ENCODE measurements at regions of chr12 and their contacts with region 1.

Region 1: GRCh38 chr12:6493497-6494257 is at the start of gene NCAPD2:
- DNase-seq: peak; percentile 82 to 97 (median 96)
- ATAC-seq: peak; percentile 91
- H3K4me3 ChIP-seq: peak within 1 kb of the TSS; percentile 98
- H3K4me3 Mint-ChIP-seq: peak within 1 kb of the TSS; percentile 86 to 98 (median 96)
- H3K27ac ChIP-seq: peak within 1 kb of the TSS; percentile 83
- H3K27ac Mint-ChIP-seq: peak within 1 kb of the TSS; percentile 87 to 97 (median 96)
- H3K4me1 ChIP-seq: peaks cover 22 to 24% of the 10 kb centered on the region in 2 donors
- H3K4me1 Mint-ChIP-seq: peaks cover 18 to 44% (median 37%) of the 10 kb centered on the region in 7 donors
- H3K27me3 ChIP-seq: no peaks in the 10 kb centered on the region
- H3K27me3 Mint-ChIP-seq: no peaks in the 10 kb centered on the region
- total RNA-seq, gene NCAPD2: 30.3 to 121 (median 38.4) TPM

Region 2: DNA sequence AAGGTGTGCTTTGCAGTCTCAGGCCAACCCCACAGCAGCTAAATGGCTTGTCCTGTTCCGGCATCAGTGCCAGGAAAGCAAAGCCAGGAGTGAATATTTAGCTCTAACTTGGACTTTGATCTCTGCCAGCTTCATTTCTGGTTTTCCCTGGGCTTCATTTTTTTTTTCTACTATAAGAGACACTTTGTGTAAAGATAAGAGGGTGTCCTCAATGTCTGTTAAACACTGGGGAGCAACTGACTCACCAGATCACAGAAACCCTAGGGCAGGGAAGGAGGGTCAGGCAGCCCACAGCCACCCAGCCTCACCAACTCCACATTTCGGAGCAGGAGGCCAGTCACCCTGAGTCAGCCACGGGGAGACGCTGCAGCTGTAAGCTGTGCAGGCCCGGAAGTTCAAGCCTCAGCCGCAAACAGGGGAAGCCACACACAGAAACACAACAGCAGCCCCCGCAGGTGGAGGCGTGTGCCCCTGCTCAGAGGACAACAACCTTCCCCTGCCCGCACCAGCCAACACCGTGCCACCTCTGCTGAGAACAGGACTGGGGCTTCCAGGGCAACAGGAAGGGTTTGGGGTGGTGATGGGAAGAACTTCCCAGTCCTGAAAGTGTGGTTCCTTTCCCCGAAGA is 158.1 kb before region 1 on chr12:
- CTCF ChIA-PET with region 1: interaction called, 3 read pairs
- POLR2A ChIA-PET with region 1: interaction called, 4 read pairs
- intact Hi-C with region 1: loop called (anchors 1 to 2 kb)
- DNase-seq: peak; percentile 56 to 85 (median 81)
- ATAC-seq: peak; percentile 82
- H3K4me3 ChIP-seq: peak overlapping the region; percentile 88
- H3K4me3 Mint-ChIP-seq: no peak overlapping the region
- H3K27ac ChIP-seq: peak overlapping the region; percentile 92
- H3K27ac Mint-ChIP-seq: no peak overlapping the region
- H3K4me1 ChIP-seq: peaks cover 58 to 67% of the 10 kb centered on the region in 2 donors
- H3K4me1 Mint-ChIP-seq: peaks cover 4 to 44% (median 36%) of the 10 kb centered on the region in 7 donors
- H3K27me3 ChIP-seq: no peaks in the 10 kb centered on the region
- H3K27me3 Mint-ChIP-seq: no peaks in the 10 kb centered on the region

Region 3: DNA sequence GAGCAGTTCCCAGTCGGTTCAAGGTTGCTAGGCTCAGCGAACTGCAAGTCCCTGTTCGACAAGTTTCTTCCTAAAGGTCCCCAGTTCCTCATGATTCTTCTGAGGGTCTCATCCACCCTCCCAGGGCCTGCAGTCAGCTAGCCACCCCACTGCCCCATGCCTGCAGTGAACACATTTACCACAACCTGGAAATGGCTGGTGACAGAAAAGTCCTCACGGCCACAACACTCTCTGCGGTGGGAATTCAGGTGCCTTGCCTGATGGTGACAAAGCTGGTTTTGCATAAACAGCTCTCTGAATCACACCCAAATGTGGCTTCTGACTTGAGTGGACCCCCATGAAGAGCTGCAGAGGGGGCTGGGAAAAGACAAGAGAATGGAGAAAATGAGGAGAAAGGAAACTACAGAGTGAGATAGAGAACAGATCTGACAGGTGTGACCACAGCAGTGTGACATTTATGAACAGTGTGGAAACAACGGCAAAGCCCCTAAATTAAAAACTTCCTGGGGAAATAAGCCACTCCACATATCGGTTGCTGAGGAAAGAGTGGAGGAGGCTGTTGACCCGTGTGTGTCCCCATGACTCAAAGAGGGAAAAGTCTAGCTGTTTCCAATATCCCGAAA is 50.2 kb before region 1 on chr12:
- CTCF ChIA-PET with region 1: no interaction called
- POLR2A ChIA-PET with region 1: interaction called, 5 read pairs
- intact Hi-C with region 1: loop called (anchors 1 kb)
- DNase-seq: no peak
- ATAC-seq: no peak
- H3K4me3 ChIP-seq: peak overlapping the region; percentile 19
- H3K4me3 Mint-ChIP-seq: peak overlapping the region; percentile 95 to 100 (median 100)
- H3K27ac ChIP-seq: peak overlapping the region; percentile 87
- H3K27ac Mint-ChIP-seq: peak overlapping the region; percentile 92 to 100 (median 95)
- H3K4me1 ChIP-seq: peaks cover 25 to 32% of the 10 kb centered on the region in 2 donors
- H3K4me1 Mint-ChIP-seq: peaks cover 22 to 63% (median 53%) of the 10 kb centered on the region in 7 donors
- H3K27me3 ChIP-seq: no peaks in the 10 kb centered on the region
- H3K27me3 Mint-ChIP-seq: no peaks in the 10 kb centered on the region

Region 4: DNA sequence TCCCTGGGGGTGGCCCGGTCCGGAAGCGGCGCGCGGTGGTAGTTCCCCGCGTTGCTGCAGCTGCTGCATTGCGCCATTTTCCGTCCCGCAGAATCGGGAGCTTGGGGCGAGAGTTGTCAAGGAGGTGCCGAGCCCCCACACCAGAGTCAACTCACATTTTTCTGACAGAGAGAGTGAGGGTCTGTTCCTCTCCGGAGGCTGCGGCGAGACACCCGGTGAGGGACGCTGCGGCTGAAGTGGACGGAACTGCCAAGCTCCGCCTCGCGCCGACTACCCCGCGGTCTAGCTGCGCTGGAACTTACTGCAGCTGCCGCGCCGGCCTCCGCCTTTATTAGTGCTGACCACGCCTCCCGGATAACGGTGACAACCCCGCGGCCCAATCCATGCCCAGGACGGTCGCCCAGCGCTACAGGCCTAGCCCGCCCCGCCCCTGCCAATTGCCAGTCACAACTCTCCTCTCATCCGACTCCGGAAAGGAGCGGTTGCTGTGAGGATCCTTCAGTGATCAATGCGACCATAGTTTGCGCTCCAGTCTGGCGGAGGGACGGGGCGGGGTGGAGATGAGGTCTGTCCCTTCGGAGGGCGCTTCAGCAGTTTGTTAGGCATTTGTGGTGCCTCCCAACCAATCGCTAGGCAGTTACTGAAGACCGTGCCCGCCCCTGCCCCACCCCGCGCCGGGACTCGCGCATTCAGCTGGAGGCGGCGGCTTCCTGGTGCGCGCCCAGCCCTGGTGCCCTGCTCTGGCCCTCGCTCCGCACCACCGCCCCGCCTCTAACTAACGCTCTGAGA is 23.1 kb before region 1 on chr12 and contains the start of gene VAMP1:
- CTCF ChIA-PET with region 1: interaction called, 8 read pairs
- POLR2A ChIA-PET with region 1: interaction called, 55 read pairs
- intact Hi-C with region 1: loop called (anchors 1 kb)
- DNase-seq: peak; percentile 90 to 97 (median 95)
- ATAC-seq: peak; percentile 94
- H3K4me3 ChIP-seq: peak within 1 kb of the TSS; percentile 96
- H3K4me3 Mint-ChIP-seq: peak within 1 kb of the TSS; percentile 85 to 96 (median 92)
- H3K27ac ChIP-seq: peak within 1 kb of the TSS; percentile 75
- H3K27ac Mint-ChIP-seq: peak within 1 kb of the TSS; percentile 79 to 99 (median 95)
- H3K4me1 ChIP-seq: peaks cover 38 to 39% of the 10 kb centered on the region in 2 donors
- H3K4me1 Mint-ChIP-seq: peaks cover 26 to 59% (median 52%) of the 10 kb centered on the region in 7 donors
- H3K27me3 ChIP-seq: no peaks in the 10 kb centered on the region
- H3K27me3 Mint-ChIP-seq: peaks cover 0 to 5% (median 0%) of the 10 kb centered on the region in 5 donors
- total RNA-seq, gene VAMP1: 38.7 to 123 (median 47.9) TPM

Region 5: DNA sequence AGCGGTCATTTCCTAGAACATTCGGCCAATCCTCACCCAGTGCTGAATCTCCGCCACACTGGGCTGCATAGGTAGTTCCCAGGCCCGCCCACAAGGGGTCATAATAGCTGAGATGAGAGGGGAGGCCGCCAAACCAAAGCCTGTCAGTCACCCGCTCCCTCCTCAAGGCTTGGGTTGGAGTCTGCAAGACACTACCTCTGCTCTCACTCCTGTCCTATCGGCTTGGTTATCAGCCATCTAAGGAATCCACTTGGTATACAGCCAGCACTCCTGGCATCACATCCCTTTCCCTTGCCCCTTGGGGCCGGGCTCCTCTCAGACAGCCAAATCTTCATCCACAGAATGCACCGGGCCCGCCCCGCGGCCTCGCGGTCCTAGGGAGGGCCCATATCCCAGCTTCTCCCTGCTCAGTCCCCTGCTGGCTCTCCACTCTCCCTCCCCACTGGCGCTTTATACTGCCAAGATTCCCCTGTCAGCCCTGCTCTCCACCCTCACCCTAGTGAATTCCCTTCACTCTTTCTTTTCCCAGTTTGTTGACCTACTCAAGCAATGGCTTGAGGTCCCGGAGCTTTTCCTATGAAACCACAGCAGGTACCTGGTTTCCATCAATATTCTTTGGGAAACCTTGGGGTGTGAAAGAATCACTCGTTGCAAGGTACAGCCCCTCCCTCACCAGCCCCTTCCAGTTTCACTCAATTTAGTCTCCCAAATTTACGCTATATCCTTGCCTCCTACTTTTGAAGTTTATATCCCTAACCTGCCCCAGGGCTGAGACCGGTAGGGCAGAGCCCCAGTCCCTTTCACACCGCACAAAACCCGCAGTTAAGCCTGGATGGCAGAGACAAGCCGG is 60.7 kb after region 1 on chr12:
- CTCF ChIA-PET with region 1: interaction called, 7 read pairs
- POLR2A ChIA-PET with region 1: interaction called, 4 read pairs
- intact Hi-C with region 1: loop called in 1 of 2 experiments (anchors 1 kb)
- DNase-seq: peak; percentile 38 to 57 (median 52)
- ATAC-seq: peak; percentile 67
- H3K4me3 ChIP-seq: peak overlapping the region; percentile 92
- H3K4me3 Mint-ChIP-seq: peak overlapping the region; percentile 80 to 96 (median 90)
- H3K27ac ChIP-seq: peak overlapping the region; percentile 71
- H3K27ac Mint-ChIP-seq: peak overlapping the region; percentile 14 to 88 (median 55)
- H3K4me1 ChIP-seq: peaks cover 26 to 29% of the 10 kb centered on the region in 2 donors
- H3K4me1 Mint-ChIP-seq: peaks cover 39 to 62% (median 56%) of the 10 kb centered on the region in 7 donors
- H3K27me3 ChIP-seq: no peaks in the 10 kb centered on the region
- H3K27me3 Mint-ChIP-seq: no peaks in the 10 kb centered on the region

Region 6: GRCh38 chr12:6723607-6724396 is 230.1 kb after region 1 on chr12 and contains the start of gene COPS7A:
- CTCF ChIA-PET with region 1: no interaction called
- POLR2A ChIA-PET with region 1: no interaction called
- intact Hi-C with region 1: loop called (anchors 1 kb)
- DNase-seq: peak; percentile 77 to 94 (median 90)
- ATAC-seq: peak; percentile 93
- H3K4me3 ChIP-seq: peak within 1 kb of the TSS; percentile 63
- H3K4me3 Mint-ChIP-seq: peak within 1 kb of the TSS; percentile 80 to 97 (median 92)
- H3K27ac ChIP-seq: peak within 1 kb of the TSS; percentile 75
- H3K27ac Mint-ChIP-seq: peak within 1 kb of the TSS; percentile 90 to 98 (median 96)
- H3K4me1 ChIP-seq: peaks cover 10 to 11% of the 10 kb centered on the region in 2 donors
- H3K4me1 Mint-ChIP-seq: peaks cover 24 to 34% (median 27%) of the 10 kb centered on the region in 7 donors
- H3K27me3 ChIP-seq: no peaks in the 10 kb centered on the region
- H3K27me3 Mint-ChIP-seq: no peaks in the 10 kb centered on the region
- total RNA-seq, gene COPS7A: 21.9 to 38.7 (median 30.1) TPM

Measured in naive thymus-derived CD4-positive, alpha-beta T cell (primary cell).